AG04450 (cell line): ENCODE measurements at regions of chr7 and their contacts with region 1.

Region 1: DNA sequence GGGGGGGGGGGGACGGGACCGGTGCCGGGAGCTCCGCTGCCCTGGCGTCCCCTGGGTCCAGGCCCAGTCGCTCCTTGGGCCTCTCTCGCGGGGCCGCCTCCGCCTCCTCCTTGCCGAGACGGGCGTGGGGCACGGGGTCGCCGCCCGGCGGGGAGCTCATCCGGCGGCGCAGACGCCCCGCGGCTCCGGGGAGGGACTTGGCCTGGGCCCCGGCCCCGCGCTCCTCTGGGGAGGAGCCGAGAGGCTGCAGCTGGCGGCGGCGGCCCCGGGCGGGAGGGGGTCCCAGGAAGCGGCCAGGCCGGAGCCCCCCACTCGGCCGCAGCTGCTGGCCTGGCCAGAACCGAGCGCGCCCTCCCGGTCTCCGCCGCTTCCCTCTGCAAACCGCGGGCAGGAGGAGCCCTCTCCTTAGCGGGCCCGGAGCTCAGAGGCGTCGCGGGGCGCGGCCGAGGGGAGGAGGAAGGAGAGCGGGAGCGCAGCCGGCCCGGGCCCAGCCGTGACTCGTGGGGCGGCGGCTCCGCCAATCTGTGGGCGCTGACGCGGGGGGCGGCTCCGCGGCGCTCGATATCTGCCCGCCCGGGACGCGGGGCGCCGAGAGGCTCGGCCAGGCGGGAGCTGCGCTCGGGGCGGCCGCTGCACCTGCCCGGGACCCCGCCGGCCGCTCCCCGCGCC is at the start of gene FAM20C:
- DNase-seq: peak; percentile 55
- H3K4me3 ChIP-seq: peak within 1 kb of the TSS; percentile 89
- H3K27ac ChIP-seq: peak within 1 kb of the TSS; percentile 83
- H3K27me3 ChIP-seq: no peaks in the 10 kb centered on the region
- CTCF ChIP-seq: no peak
- polyA plus RNA-seq, gene FAM20C: 34.5 and 44.6 TPM in 2 replicates

Region 2: DNA sequence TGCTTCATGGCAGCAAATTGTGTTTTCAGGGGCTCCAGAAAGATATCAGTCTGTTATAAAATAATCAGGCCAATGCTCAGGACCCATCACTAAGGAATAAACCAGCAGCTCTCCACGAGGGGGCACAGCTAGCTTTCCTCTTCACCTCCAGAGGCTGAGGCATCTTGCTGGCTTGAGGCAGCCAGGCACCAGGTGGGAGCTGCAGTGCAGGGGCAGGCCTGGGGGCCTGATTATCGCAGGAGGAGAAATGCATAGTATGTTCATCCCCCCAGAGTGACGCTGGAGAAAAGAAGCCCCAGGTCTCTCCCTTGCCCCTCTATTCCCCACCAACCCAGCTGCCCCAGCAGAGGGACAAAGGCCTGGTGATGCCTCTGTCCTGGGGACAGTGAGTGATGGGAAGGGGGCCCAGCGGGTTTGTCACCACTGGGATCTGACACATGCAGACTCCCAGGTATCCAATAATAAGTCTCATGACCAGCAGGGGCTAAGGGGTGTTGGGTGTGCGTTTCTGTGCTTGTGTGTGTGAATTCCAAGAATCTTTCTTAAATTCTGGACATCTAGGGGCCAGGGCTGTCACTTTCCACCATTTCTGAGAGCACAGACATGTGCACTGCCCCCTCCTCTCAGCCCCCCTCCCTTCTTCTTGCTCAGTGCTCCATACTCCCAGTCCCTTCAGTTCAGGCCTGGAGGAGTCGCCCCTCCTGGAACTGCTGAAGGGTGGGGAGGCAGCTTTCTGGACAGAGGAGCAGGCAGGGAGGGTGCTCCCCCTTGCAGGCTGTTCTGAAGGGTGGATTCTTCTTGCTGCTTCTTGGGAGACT is 127.8 kb before region 1 on chr7:
- CTCF ChIA-PET with region 1: interaction called, 4 read pairs
- POLR2A ChIA-PET with region 1: interaction called, 19 read pairs
- DNase-seq: peak; percentile 43
- H3K4me3 ChIP-seq: no peak overlapping the region
- H3K27ac ChIP-seq: no peak overlapping the region
- H3K27me3 ChIP-seq: peaks cover 4% of the 10 kb centered on the region
- CTCF ChIP-seq: peak; percentile 75

Region 3: GRCh38 chr7:155469-155900 is 36.6 kb before region 1 on chr7:
- CTCF ChIA-PET with region 1: interaction called, 3 read pairs
- POLR2A ChIA-PET with region 1: interaction called, 13 read pairs
- DNase-seq: no peak
- H3K4me3 ChIP-seq: no peak overlapping the region
- H3K27ac ChIP-seq: no peak overlapping the region
- H3K27me3 ChIP-seq: peaks cover 9% of the 10 kb centered on the region
- CTCF ChIP-seq: no peak

Region 4: GRCh38 chr7:220151-220841 is 28.2 kb after region 1 on chr7:
- CTCF ChIA-PET with region 1: no interaction called
- POLR2A ChIA-PET with region 1: no interaction called
- DNase-seq: no peak
- H3K4me3 ChIP-seq: no peak overlapping the region
- H3K27ac ChIP-seq: no peak overlapping the region
- H3K27me3 ChIP-seq: no peaks in the 10 kb centered on the region
- CTCF ChIP-seq: no peak

Region 5: DNA sequence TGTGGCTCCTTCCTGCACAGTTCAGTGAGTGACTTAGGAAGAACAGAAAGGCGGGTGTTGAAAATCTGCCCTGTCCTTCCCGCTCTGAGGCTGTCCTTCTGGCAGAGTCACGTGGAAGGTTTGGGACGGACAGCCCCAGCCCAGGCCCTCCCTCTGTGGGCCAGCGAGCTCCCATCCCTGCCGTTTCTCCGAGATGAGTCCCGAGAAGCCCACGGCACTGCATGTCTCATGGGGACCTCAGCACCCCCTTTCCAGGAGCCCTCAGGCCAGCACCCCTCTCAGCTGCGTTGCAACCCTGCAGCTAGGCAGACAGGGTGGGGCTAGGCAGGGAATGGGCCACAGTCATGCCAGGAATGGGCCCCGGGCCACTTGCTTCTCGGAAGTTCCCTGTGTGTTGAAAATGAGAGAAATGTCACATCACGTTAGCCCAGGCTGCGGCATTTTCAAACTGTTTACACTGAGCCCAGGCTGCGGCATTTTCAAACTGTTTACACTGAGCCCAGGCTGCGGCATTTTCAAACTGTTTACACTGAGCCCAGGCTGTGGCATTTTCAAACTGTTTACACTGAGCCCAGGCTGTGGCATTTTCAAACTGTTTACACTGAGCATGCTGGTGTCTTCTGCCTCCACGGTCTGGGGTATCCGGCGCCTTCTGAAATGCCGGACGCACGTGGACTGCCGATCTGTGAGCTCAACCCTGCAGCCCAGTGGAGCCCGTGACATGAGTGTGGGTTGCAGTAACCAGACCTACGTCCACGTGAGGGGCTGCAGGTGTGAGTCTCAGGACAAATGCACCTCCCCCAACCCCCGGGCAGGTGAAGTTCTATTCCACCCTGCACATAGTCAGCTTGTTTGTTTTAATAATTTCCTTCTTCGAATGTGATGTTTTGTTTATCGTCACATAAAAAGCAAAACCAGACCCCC is 42.8 kb after region 1 on chr7:
- CTCF ChIA-PET with region 1: no interaction called
- POLR2A ChIA-PET with region 1: interaction called, 17 read pairs
- DNase-seq: peak; percentile 65
- H3K4me3 ChIP-seq: peak overlapping the region; percentile 22
- H3K27ac ChIP-seq: peak overlapping the region; percentile 90
- H3K27me3 ChIP-seq: no peaks in the 10 kb centered on the region
- CTCF ChIP-seq: no peak